PC-9 (cell line): ENCODE measurements at regions of chr12 and their contacts with region 1.

Region 1: DNA sequence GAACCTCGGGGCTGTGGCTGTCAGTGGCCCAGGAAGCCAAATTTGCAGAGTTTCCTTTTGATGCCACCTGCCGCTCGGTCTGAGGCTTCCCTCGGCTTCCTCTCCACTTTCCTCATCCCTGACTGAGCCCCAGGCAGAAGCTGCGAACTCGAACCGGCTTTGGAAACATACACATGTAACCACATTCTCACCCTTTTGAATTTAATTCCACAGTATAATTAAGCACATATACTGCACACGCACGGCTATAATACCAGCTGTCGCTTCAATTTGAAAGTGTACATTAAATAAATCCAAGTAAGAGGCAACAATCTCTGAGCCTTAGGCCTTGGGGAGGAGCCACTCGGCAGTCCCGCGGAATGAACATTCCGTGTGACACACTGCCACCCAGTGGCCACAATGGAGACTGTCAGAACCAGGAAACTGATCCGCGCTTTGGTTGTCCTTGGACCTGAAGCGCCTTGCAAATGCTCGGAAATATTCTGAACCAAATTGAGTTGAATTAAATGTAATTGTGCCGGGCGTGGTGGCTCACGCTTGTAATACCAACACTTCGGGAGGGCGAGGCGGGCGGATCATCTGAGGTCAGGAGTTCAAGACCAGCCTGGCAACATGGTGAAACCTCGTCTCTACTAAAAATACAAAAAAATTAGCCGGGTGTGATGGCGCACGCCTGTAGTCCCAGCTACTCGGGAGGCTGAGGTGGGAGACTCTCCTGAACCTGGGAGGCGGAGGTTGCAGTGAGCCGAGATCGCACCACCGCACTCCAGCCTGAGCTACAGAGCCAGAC is 117.9 kb upstream of the TMPO start:
- DNase-seq: peak; percentile 71 to 79
- H3K4me3 ChIP-seq: peak overlapping the region; percentile 63
- H3K27ac ChIP-seq: no peak overlapping the region
- H3K4me1 ChIP-seq: peaks cover 29% of the 10 kb centered on the region
- H3K27me3 ChIP-seq: 0 out of 2 replicates have a peak, but pooled peaks cover 5% of the 10 kb centered on the region
- CTCF ChIP-seq: peak; percentile 93

Region 2: DNA sequence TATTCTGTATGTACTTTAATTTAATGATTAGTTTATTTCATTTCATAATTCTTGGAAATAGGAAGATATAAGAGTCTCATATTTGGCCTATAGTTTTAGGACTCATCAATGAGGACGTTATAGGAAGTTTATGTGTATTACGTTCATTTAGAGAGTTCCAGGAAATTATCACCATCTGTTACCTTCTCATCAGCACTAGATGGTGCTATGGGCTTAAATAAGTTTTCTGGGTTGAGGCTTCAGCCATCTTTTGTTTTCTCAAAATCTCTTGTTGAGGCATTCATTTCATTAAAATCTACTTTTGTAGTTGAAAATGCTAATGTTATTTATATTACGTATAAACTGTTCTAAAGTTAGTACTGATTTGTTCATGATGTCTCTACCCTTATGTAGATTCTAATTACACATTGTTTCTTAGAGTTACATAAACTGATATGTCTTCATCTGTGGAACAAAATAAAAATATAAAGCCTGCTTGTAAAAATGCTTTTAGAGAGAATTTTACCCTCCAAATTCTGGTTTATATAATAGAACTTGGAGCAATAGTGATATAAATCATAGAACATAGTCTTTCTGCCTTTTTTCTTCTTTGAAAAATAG is 1818.9 kb before region 1 on chr12:
- CTCF ChIA-PET with region 1: no interaction called
- POLR2A ChIA-PET with region 1: no interaction called
- intact Hi-C with region 1: loop called (anchors 5 kb)
- DNase-seq: no peak
- H3K4me3 ChIP-seq: no peak overlapping the region
- H3K27ac ChIP-seq: no peak overlapping the region
- H3K4me1 ChIP-seq: no peaks in the 10 kb centered on the region
- H3K27me3 ChIP-seq: no peaks in the 10 kb centered on the region
- CTCF ChIP-seq: peak; percentile 73

Region 3: DNA sequence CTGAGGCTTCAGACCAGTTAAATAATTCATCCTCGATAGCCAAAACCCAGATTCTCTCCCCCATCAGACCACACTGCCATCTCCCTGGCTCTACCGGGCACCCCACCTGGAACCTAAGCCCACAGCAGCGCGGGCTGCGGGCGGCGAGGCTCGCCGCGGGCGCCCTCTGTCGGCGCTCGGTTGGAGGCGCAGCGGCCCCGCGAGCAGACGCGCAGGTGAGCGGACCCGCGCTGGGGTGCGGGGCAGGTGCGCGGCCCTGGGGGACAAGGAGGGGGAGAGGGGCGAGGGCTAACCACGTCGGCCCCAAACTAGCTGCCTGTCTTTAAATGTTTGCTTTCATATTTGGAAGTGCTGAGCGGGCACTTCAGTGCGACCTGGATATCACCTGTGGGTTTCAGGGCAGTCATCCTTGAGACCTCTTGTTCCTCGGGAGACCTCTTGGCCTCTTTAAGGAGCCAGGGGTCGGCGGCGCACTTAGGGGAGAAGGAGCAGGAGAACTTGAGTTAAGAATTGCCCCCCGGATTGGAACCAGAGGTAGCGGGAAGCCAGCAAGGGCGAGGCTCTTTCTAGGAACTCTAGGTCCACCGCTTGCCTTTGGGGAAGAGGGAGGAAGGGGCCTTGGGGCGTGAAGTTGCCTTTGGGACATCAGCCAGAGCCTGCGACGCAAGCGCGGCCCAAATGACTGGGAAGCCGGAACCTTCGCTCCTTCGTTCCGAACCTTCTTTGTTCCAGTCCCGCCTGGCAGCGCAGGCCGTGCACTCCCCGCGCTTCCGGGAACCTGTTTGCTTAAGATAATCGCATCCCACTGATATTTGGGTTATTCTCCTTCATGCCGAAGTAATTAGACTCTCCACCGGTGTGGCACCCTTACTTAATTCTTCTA is 1411.8 kb before region 1 on chr12:
- CTCF ChIA-PET with region 1: interaction called, 4 read pairs
- POLR2A ChIA-PET with region 1: no interaction called
- intact Hi-C with region 1: loop called (anchors 1 kb)
- DNase-seq: peak in 1 of 2 experiments; percentile 32
- H3K4me3 ChIP-seq: no peak overlapping the region; the same call in 1 of the 2 replicates
- H3K27ac ChIP-seq: no peak overlapping the region
- H3K4me1 ChIP-seq: no peaks in the 10 kb centered on the region
- H3K27me3 ChIP-seq: peaks cover 13% of the 10 kb centered on the region; the same call in 1 of the 2 replicates
- CTCF ChIP-seq: peak; percentile 68

Region 4: DNA sequence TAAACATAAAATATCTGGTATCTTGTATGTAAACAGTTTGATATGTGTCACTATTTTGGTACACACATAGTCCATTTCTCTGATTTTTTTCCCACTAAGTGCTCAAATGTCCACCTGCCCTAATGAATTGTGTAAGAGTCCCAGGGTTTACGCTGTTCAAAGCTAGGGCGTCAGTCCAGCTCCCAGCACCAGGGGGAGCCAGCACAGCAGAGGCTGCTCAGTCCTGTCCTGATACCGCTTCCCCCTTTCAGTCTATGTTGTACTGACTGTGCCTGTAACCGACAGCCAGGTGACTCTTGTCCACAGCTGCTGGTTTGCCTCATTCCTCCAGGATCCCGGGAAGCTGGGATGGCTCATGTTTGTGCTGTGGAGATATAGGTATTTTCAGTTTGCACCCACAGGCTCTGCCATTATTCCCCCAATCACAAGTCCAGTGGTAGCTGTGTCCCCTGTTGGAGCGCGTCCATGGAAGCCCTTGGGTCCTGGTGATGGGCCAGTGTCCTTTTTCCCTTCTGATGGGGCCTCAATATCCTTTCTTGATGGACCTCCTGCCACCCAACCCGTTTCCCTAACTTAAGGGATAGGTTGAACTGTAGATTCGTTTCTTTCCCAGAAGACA is 1248.5 kb before region 1 on chr12:
- CTCF ChIA-PET with region 1: no interaction called
- POLR2A ChIA-PET with region 1: no interaction called
- intact Hi-C with region 1: loop called (anchors 1 kb)
- DNase-seq: peak in 1 of 2 experiments; percentile 41
- H3K4me3 ChIP-seq: no peak overlapping the region
- H3K27ac ChIP-seq: no peak overlapping the region
- H3K4me1 ChIP-seq: no peaks in the 10 kb centered on the region
- H3K27me3 ChIP-seq: peaks cover 19% of the 10 kb centered on the region; the same call in 1 of the 2 replicates
- CTCF ChIP-seq: peak; percentile 71

Region 5: GRCh38 chr12:98418357-98419075 is 21.0 kb after region 1 on chr12:
- CTCF ChIA-PET with region 1: no interaction called
- POLR2A ChIA-PET with region 1: interaction called, 3 read pairs
- intact Hi-C with region 1: loop called (anchors 1 kb)
- DNase-seq: peak; percentile 93 to 97
- H3K4me3 ChIP-seq: peak overlapping the region; percentile 6; the same call in 1 of the 2 replicates
- H3K27ac ChIP-seq: peak overlapping the region; percentile 77
- H3K4me1 ChIP-seq: peaks cover 20% of the 10 kb centered on the region
- H3K27me3 ChIP-seq: no peaks in the 10 kb centered on the region
- CTCF ChIP-seq: no peak

Region 6: GRCh38 chr12:98788396-98788795 is 390.9 kb after region 1 on chr12:
- CTCF ChIA-PET with region 1: no interaction called
- POLR2A ChIA-PET with region 1: no interaction called
- intact Hi-C with region 1: no loop called
- DNase-seq: no peak
- H3K4me3 ChIP-seq: no peak overlapping the region
- H3K27ac ChIP-seq: no peak overlapping the region
- H3K4me1 ChIP-seq: no peaks in the 10 kb centered on the region
- H3K27me3 ChIP-seq: peaks cover 52% of the 10 kb centered on the region
- CTCF ChIP-seq: no peak